Breast epithelium (tissue), 4 donors: ENCODE measurements at regions of chr11 and their contacts with region 1.

Region 1: GRCh38 chr11:129917231-129917630 is 21.9 kb upstream of the NFRKB start:
- DNase-seq: no peak
- H3K4me3 ChIP-seq: no peak overlapping the region
- H3K27ac ChIP-seq: no peak overlapping the region
- H3K4me1 ChIP-seq: no peaks in the 10 kb centered on the region
- H3K27me3 ChIP-seq: no peaks in the 10 kb centered on the region
- CTCF ChIP-seq: no peak
- POLR2A ChIP-seq: no peak

Region 2: GRCh38 chr11:129625930-129626329 is 291.3 kb before region 1 on chr11:
- intact Hi-C with region 1: no loop called
- DNase-seq: no peak
- H3K4me3 ChIP-seq: no peak overlapping the region
- H3K27ac ChIP-seq: no peak overlapping the region
- H3K4me1 ChIP-seq: no peaks in the 10 kb centered on the region
- H3K27me3 ChIP-seq: no peaks in the 10 kb centered on the region
- CTCF ChIP-seq: no peak
- POLR2A ChIP-seq: no peak

Region 3: DNA sequence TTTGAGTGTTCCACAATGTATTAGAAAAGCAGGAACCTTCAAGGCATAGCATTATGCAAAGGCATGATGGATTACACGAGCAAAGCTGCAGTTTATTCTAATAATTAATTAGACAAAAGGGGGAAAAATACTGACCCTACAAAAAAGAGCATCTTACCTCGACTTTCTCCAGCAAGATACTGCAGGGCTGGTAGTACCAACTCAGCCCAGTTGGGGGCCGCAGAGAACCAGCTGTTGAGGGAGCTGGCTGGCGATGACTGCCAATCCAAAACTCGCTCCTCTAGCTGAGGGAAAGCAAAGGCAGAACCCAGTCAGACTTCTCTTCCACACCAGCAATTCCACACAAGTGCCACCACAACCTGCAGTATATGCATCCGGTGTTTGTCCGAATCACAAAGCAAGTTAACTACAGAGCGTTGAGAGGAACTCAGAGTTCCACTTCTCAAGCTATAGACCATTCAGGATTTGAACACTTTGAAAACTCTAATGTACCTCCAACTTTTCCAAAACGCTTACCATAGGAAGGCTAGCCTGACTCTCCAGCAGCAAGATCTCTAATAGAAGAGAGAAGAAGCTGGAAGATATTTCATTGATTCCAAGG is 35.6 kb before region 1 on chr11:
- intact Hi-C with region 1: loop called (anchors 1 kb)
- DNase-seq: no peak
- H3K4me3 ChIP-seq: no peak overlapping the region
- H3K27ac ChIP-seq: no peak overlapping the region
- H3K4me1 ChIP-seq: no peaks in the 10 kb centered on the region
- H3K27me3 ChIP-seq: no peaks in the 10 kb centered on the region
- CTCF ChIP-seq: peak in 2 of 3 donors; percentile 28 to 30
- POLR2A ChIP-seq: no peak